ENCODE measurements at regions of chr3 and their contacts with region 1.

Region 1: GRCh38 chr3:111594205-111594604 is 941 bp downstream of the ZBED2 start:
- DNase-seq: peak; percentile 25
- ATAC-seq: peak; percentile 74
- H3K4me3 ChIP-seq: no peak overlapping the region
- H3K4me3 Mint-ChIP-seq: peak overlapping the region; percentile 56
- H3K27ac ChIP-seq: peak overlapping the region; percentile 16 to 71
- H3K27ac Mint-ChIP-seq: peak overlapping the region; percentile 84
- H3K4me1 ChIP-seq: peaks cover 27 to 47% of the 10 kb centered on the region in 2 donors
- H3K4me1 Mint-ChIP-seq: peaks cover 58% of the 10 kb centered on the region
- H3K27me3 ChIP-seq: no peaks in the 10 kb centered on the region
- H3K27me3 Mint-ChIP-seq: no peaks in the 10 kb centered on the region
- CTCF ChIP-seq: no peak

Region 2: GRCh38 chr3:111610189-111610588 is 16.0 kb after region 1 on chr3:
- CTCF ChIA-PET with region 1: interaction called, 17 read pairs
- POLR2A ChIA-PET with region 1: no interaction called
- intact Hi-C with region 1: loop called (anchors 1 kb)
- DNase-seq: peak; percentile 52
- ATAC-seq: peak; percentile 84
- H3K4me3 ChIP-seq: no peak overlapping the region
- H3K4me3 Mint-ChIP-seq: peak overlapping the region; percentile 74
- H3K27ac ChIP-seq: peak overlapping the region in 1 of 2 donors; percentile 10
- H3K27ac Mint-ChIP-seq: peak overlapping the region; percentile 83
- H3K4me1 ChIP-seq: peaks cover 17 to 19% of the 10 kb centered on the region in 2 donors
- H3K4me1 Mint-ChIP-seq: peaks cover 42% of the 10 kb centered on the region
- H3K27me3 ChIP-seq: no peaks in the 10 kb centered on the region
- H3K27me3 Mint-ChIP-seq: no peaks in the 10 kb centered on the region
- CTCF ChIP-seq: no peak

Region 3: GRCh38 chr3:111904376-111905241 is 310.4 kb after region 1 on chr3:
- CTCF ChIA-PET with region 1: no interaction called
- POLR2A ChIA-PET with region 1: no interaction called
- intact Hi-C with region 1: no loop called
- DNase-seq: no peak
- ATAC-seq: no peak
- H3K4me3 ChIP-seq: no peak overlapping the region
- H3K4me3 Mint-ChIP-seq: no peak overlapping the region
- H3K27ac ChIP-seq: no peak overlapping the region
- H3K27ac Mint-ChIP-seq: no peak overlapping the region
- H3K4me1 ChIP-seq: no peaks in the 10 kb centered on the region
- H3K4me1 Mint-ChIP-seq: peaks cover 2% of the 10 kb centered on the region
- H3K27me3 ChIP-seq: no peaks in the 10 kb centered on the region
- H3K27me3 Mint-ChIP-seq: no peaks in the 10 kb centered on the region
- CTCF ChIP-seq: no peak